IMR-90 (cell line): ENCODE measurements at regions of chr2 and their contacts with region 1.

Region 1: GRCh38 chr2:156332534-156333273 is at the start of gene NR4A2:
- DNase-seq: peak; percentile 92
- ATAC-seq: peak; percentile 69
- H3K4me3 ChIP-seq: peak within 1 kb of the TSS; percentile 88
- H3K27ac ChIP-seq: peak within 1 kb of the TSS; percentile 93
- H3K4me1 ChIP-seq: no peaks in the 10 kb centered on the region; the same call in none of the 2 replicates
- H3K27me3 ChIP-seq: no peaks in the 10 kb centered on the region
- CTCF ChIP-seq: no peak
- POLR2A ChIP-seq: peak; percentile 99
- RAD21 ChIP-seq: no peak
- total RNA-seq, gene NR4A2: 0.72 and 2.8 TPM in 2 replicates

Region 2: DNA sequence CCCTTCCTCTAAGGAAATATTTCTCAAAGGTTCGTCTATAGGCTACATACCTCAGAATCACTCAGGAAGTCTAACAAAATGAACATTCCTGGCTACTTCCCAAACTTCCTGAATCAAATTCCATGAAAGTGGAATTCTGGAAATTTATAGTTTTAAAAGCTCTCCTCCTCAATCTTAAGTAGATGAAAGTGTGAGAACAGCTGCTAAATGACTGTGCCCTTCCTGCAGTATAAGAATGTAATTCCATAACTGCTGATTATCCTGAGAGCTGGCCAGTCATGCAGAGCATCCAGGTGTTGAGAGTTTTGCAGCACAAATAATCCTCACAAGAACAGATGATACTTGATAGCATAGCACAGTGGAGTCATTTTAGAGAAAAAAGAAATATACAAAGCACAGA is 1369.2 kb before region 1 on chr2:
- CTCF ChIA-PET with region 1: no interaction called
- POLR2A ChIA-PET with region 1: no interaction called
- dilution Hi-C with region 1: no loop called
- in situ Hi-C with region 1: no loop called
- intact Hi-C with region 1: no loop called
- DNase-seq: no peak
- ATAC-seq: no peak
- H3K4me3 ChIP-seq: no peak overlapping the region
- H3K27ac ChIP-seq: no peak overlapping the region
- H3K4me1 ChIP-seq: no peaks in the 10 kb centered on the region
- H3K27me3 ChIP-seq: no peaks in the 10 kb centered on the region
- CTCF ChIP-seq: no peak
- POLR2A ChIP-seq: no peak
- RAD21 ChIP-seq: no peak

Region 3: GRCh38 chr2:155377266-155377680 is 955.4 kb before region 1 on chr2:
- CTCF ChIA-PET with region 1: no interaction called
- POLR2A ChIA-PET with region 1: no interaction called
- dilution Hi-C with region 1: no loop called
- in situ Hi-C with region 1: no loop called
- intact Hi-C with region 1: loop called (anchors 5 kb)
- DNase-seq: peak; percentile 35
- ATAC-seq: no peak
- H3K4me3 ChIP-seq: no peak overlapping the region
- H3K27ac ChIP-seq: no peak overlapping the region
- H3K4me1 ChIP-seq: no peaks in the 10 kb centered on the region
- H3K27me3 ChIP-seq: no peaks in the 10 kb centered on the region
- CTCF ChIP-seq: peak; percentile 43
- POLR2A ChIP-seq: no peak
- RAD21 ChIP-seq: peak; percentile 46

Region 4: DNA sequence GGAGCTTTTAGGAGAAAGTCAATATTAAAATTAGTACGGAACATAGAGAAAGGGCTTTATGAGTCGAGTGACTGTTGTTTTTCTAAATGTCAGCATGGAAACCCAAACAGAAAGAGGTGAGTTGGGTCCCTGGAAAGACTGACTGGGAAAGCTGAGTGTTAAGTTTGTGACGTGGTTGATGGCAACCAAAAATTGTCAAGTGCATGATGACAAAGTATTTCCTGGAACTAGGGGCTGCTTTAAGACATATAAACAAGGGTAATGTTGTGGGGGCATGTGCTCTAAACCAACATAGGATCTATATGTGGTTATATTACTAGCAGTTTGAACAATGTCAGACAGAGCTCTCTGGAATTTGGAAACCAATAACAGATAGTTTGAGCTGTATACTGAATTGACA is 52.5 kb after region 1 on chr2:
- CTCF ChIA-PET with region 1: no interaction called
- POLR2A ChIA-PET with region 1: no interaction called
- dilution Hi-C with region 1: no loop called
- in situ Hi-C with region 1: no loop called
- intact Hi-C with region 1: no loop called
- DNase-seq: no peak
- ATAC-seq: no peak
- H3K4me3 ChIP-seq: no peak overlapping the region
- H3K27ac ChIP-seq: no peak overlapping the region
- H3K4me1 ChIP-seq: no peaks in the 10 kb centered on the region
- H3K27me3 ChIP-seq: peaks cover 6% of the 10 kb centered on the region
- CTCF ChIP-seq: no peak
- POLR2A ChIP-seq: no peak
- RAD21 ChIP-seq: no peak

Region 5: GRCh38 chr2:156435715-156436496 is 103.2 kb after region 1 on chr2 and contains the start of gene GPD2:
- CTCF ChIA-PET with region 1: no interaction called
- POLR2A ChIA-PET with region 1: no interaction called
- dilution Hi-C with region 1: no loop called
- in situ Hi-C with region 1: no loop called
- intact Hi-C with region 1: loop called (anchors 1 kb)
- DNase-seq: peak; percentile 82
- ATAC-seq: peak; percentile 95
- H3K4me3 ChIP-seq: peak within 1 kb of the TSS; percentile 72
- H3K27ac ChIP-seq: peak within 1 kb of the TSS; percentile 96
- H3K4me1 ChIP-seq: peaks cover 17% of the 10 kb centered on the region
- H3K27me3 ChIP-seq: no peaks in the 10 kb centered on the region
- CTCF ChIP-seq: no peak
- POLR2A ChIP-seq: peak; percentile 55; the same call in 1 of the 2 replicates
- RAD21 ChIP-seq: no peak
- total RNA-seq, gene GPD2: 100 and 153 TPM in 2 replicates

Region 6: DNA sequence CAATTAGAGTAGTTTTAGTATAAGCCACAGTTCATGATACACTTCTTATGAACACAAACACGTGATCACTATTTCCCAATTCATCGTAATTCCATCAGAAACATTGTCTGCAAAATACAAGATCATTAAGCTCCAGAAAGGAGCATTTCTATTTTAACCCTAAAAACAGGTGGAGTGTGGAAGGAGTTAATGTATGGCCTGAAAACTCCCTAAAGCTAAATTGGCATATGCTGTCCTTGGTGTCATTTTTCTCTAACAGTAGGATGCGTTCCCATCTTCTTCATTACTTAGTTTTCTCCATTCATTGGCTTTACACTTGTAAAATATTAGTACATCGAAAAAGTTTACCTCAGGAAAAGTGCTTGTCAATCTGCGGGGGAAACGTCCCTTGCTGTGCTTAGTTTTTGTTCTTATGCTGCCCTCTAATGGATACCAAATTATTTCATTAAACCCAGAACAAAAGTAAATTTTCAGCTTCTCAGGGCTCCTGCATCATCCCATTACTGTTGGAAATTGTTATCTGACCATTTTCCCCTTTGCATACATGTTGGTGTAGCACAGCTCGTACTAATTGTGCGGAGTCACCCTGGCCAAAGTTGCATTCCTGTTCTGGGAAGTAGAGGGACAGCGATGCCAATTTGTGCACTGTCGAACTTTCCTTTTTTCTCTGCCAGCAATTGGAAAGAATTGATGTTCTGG is 256.8 kb after region 1 on chr2:
- CTCF ChIA-PET with region 1: interaction called, 20 read pairs
- POLR2A ChIA-PET with region 1: no interaction called
- dilution Hi-C with region 1: no loop called
- in situ Hi-C with region 1: loop called (anchors 25 kb)
- intact Hi-C with region 1: loop called (anchors 1 kb)
- DNase-seq: peak; percentile 62
- ATAC-seq: peak; percentile 74
- H3K4me3 ChIP-seq: no peak overlapping the region
- H3K27ac ChIP-seq: no peak overlapping the region
- H3K4me1 ChIP-seq: no peaks in the 10 kb centered on the region
- H3K27me3 ChIP-seq: no peaks in the 10 kb centered on the region
- CTCF ChIP-seq: peak; percentile 72
- POLR2A ChIP-seq: no peak
- RAD21 ChIP-seq: peak; percentile 85

Region 7: DNA sequence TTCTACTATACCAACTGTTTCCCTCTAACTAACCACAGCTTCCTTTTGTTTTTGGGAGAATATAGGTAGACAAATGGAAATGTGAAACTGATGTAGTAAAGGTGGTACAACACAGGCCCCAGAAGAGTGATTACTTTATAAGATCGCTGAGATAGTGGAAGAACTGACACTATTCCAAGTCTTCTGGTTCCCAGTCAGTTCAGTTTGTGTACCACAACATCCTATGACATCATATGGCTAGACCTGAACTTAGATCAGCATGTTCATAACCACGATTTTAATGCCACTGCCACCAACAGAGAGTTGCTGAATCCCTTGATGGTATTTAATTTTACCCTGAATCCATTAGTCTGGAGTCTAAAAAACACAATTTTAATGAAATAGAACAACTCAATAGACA is 432.3 kb after region 1 on chr2:
- CTCF ChIA-PET with region 1: no interaction called
- POLR2A ChIA-PET with region 1: no interaction called
- dilution Hi-C with region 1: no loop called
- in situ Hi-C with region 1: no loop called
- intact Hi-C with region 1: no loop called
- DNase-seq: no peak
- ATAC-seq: no peak
- H3K4me3 ChIP-seq: no peak overlapping the region
- H3K27ac ChIP-seq: no peak overlapping the region
- H3K4me1 ChIP-seq: no peaks in the 10 kb centered on the region
- H3K27me3 ChIP-seq: no peaks in the 10 kb centered on the region
- CTCF ChIP-seq: no peak
- POLR2A ChIP-seq: no peak
- RAD21 ChIP-seq: no peak

Region 8: DNA sequence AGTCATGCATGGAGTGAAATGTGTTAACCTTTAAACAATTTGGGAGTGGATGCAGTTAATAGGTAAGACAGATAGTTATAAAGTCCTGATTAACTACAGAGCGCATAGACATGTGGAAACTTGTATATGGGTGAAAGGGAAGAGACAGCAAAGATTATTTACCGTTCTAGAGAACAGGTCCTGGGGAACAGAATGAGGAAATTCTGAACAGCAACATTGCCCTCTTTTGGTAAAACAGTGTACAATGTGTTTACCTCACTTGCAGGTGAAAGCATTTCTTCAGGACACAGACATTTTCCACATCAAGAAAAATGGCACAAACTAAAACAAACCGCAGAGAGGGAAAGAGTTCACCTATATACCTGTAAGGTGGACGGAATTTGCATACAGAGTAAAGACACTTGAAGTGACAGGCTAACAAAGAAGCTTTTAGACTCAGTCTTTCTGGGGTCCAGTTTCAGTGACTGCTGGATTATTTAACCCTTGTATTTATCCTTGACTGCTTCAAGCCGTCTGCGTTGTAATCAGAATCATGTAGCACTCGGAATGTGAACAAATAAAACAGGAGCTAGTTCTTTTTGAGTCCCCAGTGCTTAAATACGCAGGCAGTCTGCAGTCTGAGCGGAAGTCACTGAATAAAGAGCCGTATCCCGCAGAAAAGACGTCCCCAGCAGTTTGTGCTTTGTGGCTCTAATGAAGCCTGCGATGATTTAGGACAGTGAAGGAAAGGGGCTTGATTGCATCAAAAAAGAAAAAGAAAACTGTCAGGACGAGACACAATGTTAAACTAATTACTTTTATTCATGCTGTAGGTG is 560.0 kb after region 1 on chr2:
- CTCF ChIA-PET with region 1: interaction called, 3 read pairs
- POLR2A ChIA-PET with region 1: no interaction called
- dilution Hi-C with region 1: no loop called
- in situ Hi-C with region 1: no loop called
- intact Hi-C with region 1: loop called (anchors 2 kb)
- DNase-seq: peak; percentile 60
- ATAC-seq: peak; percentile 79
- H3K4me3 ChIP-seq: peak overlapping the region; percentile 20
- H3K27ac ChIP-seq: no peak overlapping the region
- H3K4me1 ChIP-seq: no peaks in the 10 kb centered on the region
- H3K27me3 ChIP-seq: no peaks in the 10 kb centered on the region
- CTCF ChIP-seq: peak; percentile 46
- POLR2A ChIP-seq: no peak
- RAD21 ChIP-seq: peak; percentile 56